Activated CD4-positive, alpha-beta T cell treated with anti-CD3 and anti-CD28 coated beads, Interleukin-2, amount 10 ng/mL, durations not matched to agents 24 days and 14 days (primary cell): ENCODE measurements at regions of chr20 and their contacts with region 1.

Region 1: DNA sequence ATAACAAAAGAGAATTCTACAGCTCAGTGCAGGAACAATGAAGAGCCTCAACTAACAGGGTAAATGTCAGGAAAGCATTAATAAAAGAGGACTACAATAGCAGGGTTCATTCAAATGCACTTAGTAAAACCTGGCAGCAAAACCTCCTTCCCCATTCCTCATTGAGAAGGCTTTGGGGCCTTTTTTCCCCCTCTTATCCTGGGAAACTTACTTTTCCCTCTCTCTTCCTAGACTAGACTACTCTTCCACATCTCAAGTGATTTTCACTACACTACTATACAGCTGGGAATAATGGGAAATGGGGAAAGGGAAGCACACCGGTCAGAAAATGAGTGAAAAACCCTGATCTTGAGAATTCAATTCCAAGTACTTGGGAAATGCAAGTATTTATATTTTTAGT is 10.1 kb downstream of the ROMO1 start:
- DNase-seq: no peak
- H3K4me3 Mint-ChIP-seq: no peak overlapping the region
- H3K27ac Mint-ChIP-seq: peak overlapping the region; percentile 1
- H3K4me1 Mint-ChIP-seq: peaks cover 31% of the 10 kb centered on the region
- H3K27me3 Mint-ChIP-seq: no peaks in the 10 kb centered on the region

Region 2: DNA sequence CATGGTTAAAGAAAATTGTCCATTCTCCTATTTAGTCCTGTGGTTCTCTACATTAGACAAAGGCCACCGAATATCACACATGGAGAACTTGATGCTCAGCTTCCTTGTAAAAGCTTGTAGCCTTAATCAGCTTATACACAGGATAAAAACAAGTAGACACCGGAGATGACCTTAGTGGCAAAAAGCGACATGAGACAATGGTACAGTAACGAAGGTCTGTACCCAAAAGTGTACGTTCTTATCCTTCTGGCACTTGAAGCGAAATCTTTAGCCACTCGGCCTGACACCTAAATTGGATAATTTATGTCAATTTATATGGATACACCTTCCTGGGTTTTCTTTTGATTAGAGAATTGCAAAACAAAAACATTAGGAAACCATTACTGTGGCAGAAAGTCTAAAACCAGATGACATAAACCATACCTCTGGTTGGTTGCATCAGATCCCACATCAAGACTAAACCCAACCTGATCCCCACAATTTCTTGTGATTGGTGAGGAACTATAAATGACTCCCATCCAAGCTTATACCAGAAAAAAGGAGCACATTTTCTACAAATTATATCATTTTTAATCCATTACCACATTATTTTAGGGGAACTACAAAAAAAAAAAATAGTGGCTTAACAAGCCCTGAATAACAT is 26.7 kb after region 1 on chr20:
- intact Hi-C with region 1: loop called (anchors 2 kb)
- DNase-seq: no peak
- H3K4me3 Mint-ChIP-seq: peak overlapping the region; percentile 66
- H3K27ac Mint-ChIP-seq: peak overlapping the region; percentile 34
- H3K4me1 Mint-ChIP-seq: peaks cover 47% of the 10 kb centered on the region
- H3K27me3 Mint-ChIP-seq: no peaks in the 10 kb centered on the region